Activated CD8-positive, alpha-beta T cell treated with anti-CD3 and anti-CD28 coated beads, Interleukin-2, amount 10 ng/mL, durations not matched to agents 7 days and 5 days (primary cell): ENCODE measurements at regions of chr12 and their contacts with region 1.

Region 1: DNA sequence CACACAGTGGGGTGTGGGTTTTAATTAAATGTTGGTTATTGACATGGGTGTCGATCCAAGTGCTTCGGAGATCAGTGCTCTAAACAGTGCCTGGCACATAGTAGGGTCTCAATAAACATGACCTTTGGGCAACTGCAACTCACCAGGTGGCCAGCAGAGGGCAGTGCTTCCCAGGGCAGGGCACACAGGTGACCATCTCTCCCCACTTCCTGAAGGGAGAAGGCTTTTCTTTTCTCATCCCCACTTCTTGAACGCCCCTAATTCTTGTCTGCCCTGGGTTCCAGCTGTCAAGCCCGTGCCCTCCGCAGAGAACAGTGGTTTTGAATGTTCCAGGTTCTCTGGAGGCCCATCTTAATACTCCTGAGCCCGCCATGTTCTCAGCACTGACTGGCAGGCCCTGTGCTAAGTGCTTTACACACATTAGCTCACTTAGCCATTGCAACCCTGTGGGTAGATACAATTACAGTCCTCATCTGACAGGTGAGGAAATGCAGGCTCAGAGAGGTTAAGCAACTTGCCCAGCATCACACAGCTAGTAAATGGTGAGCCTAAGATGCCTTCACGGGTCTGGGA is 16.3 kb downstream of the RAPGEF3 start:
- DNase-seq: peak; percentile 82
- ATAC-seq: peak; percentile 55
- H3K4me3 Mint-ChIP-seq: no peak overlapping the region
- H3K27ac Mint-ChIP-seq: no peak overlapping the region
- H3K4me1 Mint-ChIP-seq: peaks cover 26% of the 10 kb centered on the region
- H3K27me3 Mint-ChIP-seq: peaks cover 19% of the 10 kb centered on the region

Region 2: GRCh38 chr12:47207340-47207717 is 535.0 kb before region 1 on chr12:
- CTCF ChIA-PET with region 1: no interaction called
- POLR2A ChIA-PET with region 1: no interaction called
- DNase-seq: peak; percentile 77
- ATAC-seq: peak; percentile 70
- H3K4me3 Mint-ChIP-seq: peak overlapping the region; percentile 83
- H3K27ac Mint-ChIP-seq: peak overlapping the region; percentile 91
- H3K4me1 Mint-ChIP-seq: peaks cover 75% of the 10 kb centered on the region
- H3K27me3 Mint-ChIP-seq: no peaks in the 10 kb centered on the region

Region 3: DNA sequence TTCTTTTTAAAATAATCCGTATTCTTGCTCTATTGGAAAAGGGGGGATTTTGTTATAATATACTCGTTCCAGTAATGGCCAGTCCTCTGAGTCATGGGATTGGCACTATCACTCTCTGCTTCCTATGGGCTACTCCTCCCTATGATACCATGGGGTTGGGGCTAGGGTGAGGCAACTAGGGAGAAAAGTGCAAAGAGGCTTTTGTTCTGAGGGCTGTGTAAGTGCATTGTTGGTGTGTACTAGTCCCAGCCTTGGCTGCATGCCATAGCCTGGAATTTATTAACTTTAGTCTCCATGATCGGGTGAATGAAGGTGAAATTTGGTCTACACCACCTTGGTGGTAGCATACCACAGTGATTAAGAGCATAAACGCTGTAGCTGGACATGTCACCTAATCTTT is 284.1 kb before region 1 on chr12:
- CTCF ChIA-PET with region 1: no interaction called
- POLR2A ChIA-PET with region 1: no interaction called
- DNase-seq: no peak
- ATAC-seq: no peak
- H3K4me3 Mint-ChIP-seq: no peak overlapping the region
- H3K27ac Mint-ChIP-seq: no peak overlapping the region
- H3K4me1 Mint-ChIP-seq: no peaks in the 10 kb centered on the region
- H3K27me3 Mint-ChIP-seq: peaks cover 2% of the 10 kb centered on the region

Region 4: DNA sequence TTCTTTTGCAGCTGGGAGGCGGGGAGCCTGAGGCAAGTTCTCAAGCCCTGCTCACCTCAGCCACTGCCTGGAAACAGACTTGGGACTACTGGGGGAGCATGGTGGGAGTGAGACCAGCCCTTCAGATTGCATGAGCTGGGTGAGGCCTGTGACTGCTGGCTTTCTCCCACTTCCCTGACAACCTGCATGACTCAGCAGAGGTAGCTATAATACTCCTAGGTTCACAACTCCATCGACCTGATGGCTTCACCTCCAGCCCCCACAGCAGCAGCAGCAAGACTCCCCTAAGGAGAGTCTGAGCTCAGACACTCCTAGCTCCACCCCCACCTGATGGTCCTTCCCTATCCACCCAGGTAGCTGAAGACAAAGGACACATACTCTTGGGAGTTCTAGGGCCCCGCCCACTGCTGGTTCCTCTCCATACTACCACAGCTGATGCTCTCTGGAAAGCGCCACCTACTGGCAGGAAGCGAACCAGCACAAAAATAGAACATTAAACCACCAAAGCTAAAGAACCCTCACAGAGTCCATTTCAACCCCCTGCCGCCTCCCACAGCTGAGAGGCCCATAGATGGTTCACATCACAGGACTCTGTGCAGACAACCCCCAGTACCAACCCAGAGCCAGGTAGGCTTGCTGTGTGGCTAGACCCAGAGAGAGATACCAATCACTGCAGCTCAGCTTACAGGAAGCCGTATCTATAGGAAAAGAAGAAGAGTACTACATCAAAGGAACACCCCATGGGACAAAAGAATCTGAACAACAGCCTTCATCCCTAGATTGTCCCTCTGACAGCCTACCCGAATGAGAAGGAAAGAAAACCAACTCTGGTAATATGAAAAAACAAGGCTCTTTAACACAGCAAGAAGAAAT is 105.2 kb before region 1 on chr12:
- CTCF ChIA-PET with region 1: no interaction called
- POLR2A ChIA-PET with region 1: no interaction called
- DNase-seq: peak; percentile 56
- ATAC-seq: no peak
- H3K4me3 Mint-ChIP-seq: no peak overlapping the region
- H3K27ac Mint-ChIP-seq: peak overlapping the region; percentile 18
- H3K4me1 Mint-ChIP-seq: peaks cover 5% of the 10 kb centered on the region
- H3K27me3 Mint-ChIP-seq: no peaks in the 10 kb centered on the region

Region 5: GRCh38 chr12:47657565-47657964 is 84.8 kb before region 1 on chr12:
- CTCF ChIA-PET with region 1: no interaction called
- POLR2A ChIA-PET with region 1: no interaction called
- DNase-seq: no peak
- ATAC-seq: no peak
- H3K4me3 Mint-ChIP-seq: no peak overlapping the region
- H3K27ac Mint-ChIP-seq: no peak overlapping the region
- H3K4me1 Mint-ChIP-seq: no peaks in the 10 kb centered on the region
- H3K27me3 Mint-ChIP-seq: no peaks in the 10 kb centered on the region

Region 6: DNA sequence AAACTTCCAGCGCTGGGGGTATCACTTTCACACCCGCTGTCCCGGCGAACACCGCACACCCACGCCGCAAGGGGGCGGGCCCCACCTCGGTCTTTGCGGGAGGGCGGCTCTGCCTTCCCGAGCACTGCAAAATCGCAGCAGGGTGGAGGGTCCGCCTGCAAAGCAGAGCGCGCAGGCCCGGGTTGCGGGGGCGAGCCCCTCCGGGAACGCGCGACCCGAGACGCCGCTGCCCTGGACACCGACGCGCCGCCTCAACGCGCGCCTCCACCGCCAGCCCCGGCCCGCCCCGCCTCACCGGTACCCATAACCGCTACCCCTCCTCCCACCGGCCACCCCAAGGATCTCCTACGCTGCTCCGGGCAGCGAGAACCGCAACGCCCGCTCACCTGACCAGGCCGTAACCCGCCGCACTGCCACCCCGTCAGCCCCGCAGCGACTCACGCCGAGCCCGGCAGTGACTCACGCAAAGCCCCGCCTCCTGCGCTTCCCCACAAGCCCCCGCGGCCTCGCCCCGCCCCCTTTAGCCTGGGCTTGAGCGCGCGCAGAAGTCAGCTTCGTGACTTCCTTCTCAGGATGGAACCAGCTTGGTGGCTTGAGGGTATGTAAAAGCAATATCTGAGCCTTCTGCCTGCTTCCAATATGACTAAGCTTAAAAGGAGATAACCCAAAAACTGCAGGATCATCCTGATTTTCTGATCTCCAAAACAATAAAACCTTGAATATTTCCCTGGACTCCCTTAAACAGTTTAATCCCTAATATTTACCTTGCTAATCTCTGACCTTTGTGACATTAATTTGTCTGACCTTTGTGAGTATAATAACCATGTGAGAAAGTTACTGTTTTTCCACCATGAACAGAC is 36.5 kb before region 1 on chr12 and contains the start of gene RPAP3:
- CTCF ChIA-PET with region 1: interaction called, 297 read pairs
- POLR2A ChIA-PET with region 1: interaction called, 4 read pairs
- DNase-seq: peak; percentile 98
- ATAC-seq: peak; percentile 96
- H3K4me3 Mint-ChIP-seq: peak within 1 kb of the TSS; percentile 92
- H3K27ac Mint-ChIP-seq: peak within 1 kb of the TSS; percentile 97
- H3K4me1 Mint-ChIP-seq: peaks cover 57% of the 10 kb centered on the region
- H3K27me3 Mint-ChIP-seq: no peaks in the 10 kb centered on the region
- total RNA-seq, gene RPAP3: 41.6 to 41.7 TPM

Region 7: DNA sequence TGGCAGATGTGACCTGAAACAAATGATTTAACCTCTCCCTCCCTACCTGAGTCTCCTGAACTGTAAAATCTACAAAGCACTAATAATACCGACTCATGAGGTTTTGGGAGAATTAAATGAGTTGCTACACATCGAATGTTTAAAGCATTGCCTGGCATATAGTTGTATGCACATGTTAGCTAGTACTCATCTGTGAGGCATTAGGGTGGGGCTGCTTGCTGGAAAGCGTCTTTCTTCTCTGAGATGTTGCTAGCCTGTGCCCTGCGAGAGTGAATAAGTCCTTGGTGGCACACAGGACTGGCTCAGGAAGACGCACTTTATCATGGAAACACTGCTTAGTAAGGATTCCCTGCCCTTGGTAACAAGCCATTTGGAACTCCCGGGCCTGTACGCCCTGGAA is 10.2 kb after region 1 on chr12:
- CTCF ChIA-PET with region 1: interaction called, 271 read pairs
- POLR2A ChIA-PET with region 1: interaction called, 9 read pairs
- DNase-seq: no peak
- ATAC-seq: no peak
- H3K4me3 Mint-ChIP-seq: no peak overlapping the region
- H3K27ac Mint-ChIP-seq: no peak overlapping the region
- H3K4me1 Mint-ChIP-seq: peaks cover 28% of the 10 kb centered on the region
- H3K27me3 Mint-ChIP-seq: peaks cover 6% of the 10 kb centered on the region

Region 8: DNA sequence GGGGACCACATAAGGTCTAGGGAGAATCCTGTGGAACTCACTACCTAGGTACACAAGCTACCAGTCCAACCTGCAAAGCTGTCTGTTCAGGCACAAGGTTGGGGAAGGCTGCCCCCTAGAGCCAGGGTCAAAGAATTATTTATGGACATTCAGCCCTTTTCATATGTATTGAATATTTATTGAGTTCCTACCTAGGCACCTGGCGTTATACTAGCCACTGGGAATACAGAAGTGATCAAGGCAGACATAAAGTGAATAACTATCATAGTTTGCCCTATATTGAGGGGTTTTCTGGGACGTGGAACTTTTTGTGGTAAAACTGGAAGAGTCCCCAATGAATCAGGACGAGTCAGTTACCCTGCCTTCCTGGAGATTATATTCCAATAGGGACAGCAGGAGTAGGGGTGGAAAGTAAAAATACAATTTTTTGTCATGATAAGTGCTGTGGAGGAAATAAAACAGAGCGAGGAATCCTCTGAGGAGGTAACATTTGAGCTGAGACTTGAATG is 24.9 kb after region 1 on chr12:
- CTCF ChIA-PET with region 1: interaction called, 646 read pairs
- POLR2A ChIA-PET with region 1: interaction called, 8 read pairs
- DNase-seq: peak; percentile 85
- ATAC-seq: peak; percentile 87
- H3K4me3 Mint-ChIP-seq: no peak overlapping the region
- H3K27ac Mint-ChIP-seq: no peak overlapping the region
- H3K4me1 Mint-ChIP-seq: peaks cover 28% of the 10 kb centered on the region
- H3K27me3 Mint-ChIP-seq: peaks cover 7% of the 10 kb centered on the region

Region 9: GRCh38 chr12:47797441-47797840 is 55.1 kb after region 1 on chr12:
- CTCF ChIA-PET with region 1: interaction called, 15 read pairs
- POLR2A ChIA-PET with region 1: no interaction called
- DNase-seq: peak; percentile 57
- ATAC-seq: peak; percentile 73
- H3K4me3 Mint-ChIP-seq: no peak overlapping the region
- H3K27ac Mint-ChIP-seq: peak overlapping the region; percentile 83
- H3K4me1 Mint-ChIP-seq: peaks cover 47% of the 10 kb centered on the region
- H3K27me3 Mint-ChIP-seq: no peaks in the 10 kb centered on the region

Region 10: DNA sequence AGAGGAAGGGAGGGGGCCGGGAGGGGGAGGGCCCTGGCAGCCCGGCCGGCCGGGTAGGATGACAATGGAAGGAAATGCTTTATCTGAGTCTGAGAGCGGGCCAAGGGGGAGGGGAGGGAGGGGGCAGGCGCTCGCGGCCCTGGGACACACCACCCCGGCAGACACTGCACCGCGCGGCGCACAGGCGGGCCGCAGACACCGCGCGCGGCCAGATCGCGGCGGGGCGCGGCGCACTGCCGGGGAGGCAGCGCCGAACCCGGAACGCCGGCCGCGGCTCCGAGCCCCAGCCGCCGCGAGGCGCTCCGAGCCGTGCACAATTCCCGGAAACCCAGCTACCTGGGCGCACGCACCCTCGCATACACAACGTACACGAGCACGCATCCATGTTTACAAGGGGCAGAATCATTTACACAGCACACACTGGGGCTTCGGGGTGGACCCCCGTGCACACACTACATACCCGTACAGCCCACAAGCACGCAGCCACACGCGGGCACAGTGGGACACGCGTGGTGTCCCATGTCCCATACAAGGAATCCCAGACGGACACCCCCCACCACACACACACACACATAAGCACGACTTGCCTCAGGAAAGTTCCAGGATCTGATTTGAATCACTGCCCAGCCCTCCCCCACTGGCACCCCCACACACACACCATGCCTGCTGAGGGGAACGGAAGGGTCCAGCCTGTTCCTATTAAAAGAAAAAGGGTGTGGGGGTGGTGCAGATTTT is 77.7 kb after region 1 on chr12 and contains the start of gene HDAC7:
- CTCF ChIA-PET with region 1: interaction called, 26 read pairs
- POLR2A ChIA-PET with region 1: no interaction called
- DNase-seq: peak; percentile 85
- ATAC-seq: peak; percentile 58
- H3K4me3 Mint-ChIP-seq: peak within 1 kb of the TSS; percentile 84
- H3K27ac Mint-ChIP-seq: peak within 1 kb of the TSS; percentile 91
- H3K4me1 Mint-ChIP-seq: peaks cover 76% of the 10 kb centered on the region
- H3K27me3 Mint-ChIP-seq: no peaks in the 10 kb centered on the region
- total RNA-seq, gene HDAC7: 180 to 207 TPM

Region 11: DNA sequence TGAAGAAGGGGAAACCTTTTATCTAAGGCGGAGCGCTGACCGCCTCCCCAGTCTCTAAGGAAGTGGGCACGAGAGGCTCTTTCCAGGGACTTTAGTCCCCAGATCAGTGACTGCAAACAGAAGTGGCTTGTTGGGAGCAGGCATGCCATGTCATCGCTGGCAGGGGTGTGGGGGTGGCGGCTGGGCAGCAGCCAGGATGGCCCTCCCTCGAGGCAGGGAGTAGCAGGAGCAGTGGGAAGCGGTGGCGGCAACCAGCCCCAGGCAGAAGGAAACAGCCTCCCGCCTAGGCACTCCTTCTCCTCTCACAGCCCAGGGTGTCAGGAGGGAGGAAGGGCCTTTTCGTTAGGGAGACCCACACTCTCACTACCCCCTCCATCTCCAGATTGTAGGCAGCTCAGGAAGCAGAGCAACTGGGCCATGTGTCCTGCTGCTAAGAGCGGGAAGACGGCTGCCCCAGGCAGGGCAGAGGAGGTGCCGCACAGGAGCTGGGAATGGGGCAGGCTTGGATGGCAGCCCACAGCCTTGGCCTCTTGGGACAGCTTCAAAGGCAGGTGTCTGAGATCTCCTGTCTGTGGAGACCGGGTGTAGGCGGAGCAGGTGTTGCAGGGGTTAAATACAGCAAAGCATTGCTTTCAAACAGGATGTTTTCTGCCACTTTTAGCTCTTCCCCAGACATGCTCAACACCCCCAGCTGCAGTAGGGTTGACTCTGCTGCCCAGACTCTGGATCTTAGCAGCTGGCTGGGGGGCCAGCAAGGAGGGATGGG is 140.6 kb after region 1 on chr12:
- CTCF ChIA-PET with region 1: interaction called, 37 read pairs
- POLR2A ChIA-PET with region 1: no interaction called
- DNase-seq: peak; percentile 63
- ATAC-seq: peak; percentile 51
- H3K4me3 Mint-ChIP-seq: peak overlapping the region; percentile 73
- H3K27ac Mint-ChIP-seq: peak overlapping the region; percentile 91
- H3K4me1 Mint-ChIP-seq: peaks cover 71% of the 10 kb centered on the region
- H3K27me3 Mint-ChIP-seq: no peaks in the 10 kb centered on the region